Activated CD4-positive, alpha-beta T cell treated with anti-CD3 and anti-CD28 coated beads for 36 hours (primary cell): ENCODE measurements at regions of chr1 and their contacts with region 1.

Region 1: DNA sequence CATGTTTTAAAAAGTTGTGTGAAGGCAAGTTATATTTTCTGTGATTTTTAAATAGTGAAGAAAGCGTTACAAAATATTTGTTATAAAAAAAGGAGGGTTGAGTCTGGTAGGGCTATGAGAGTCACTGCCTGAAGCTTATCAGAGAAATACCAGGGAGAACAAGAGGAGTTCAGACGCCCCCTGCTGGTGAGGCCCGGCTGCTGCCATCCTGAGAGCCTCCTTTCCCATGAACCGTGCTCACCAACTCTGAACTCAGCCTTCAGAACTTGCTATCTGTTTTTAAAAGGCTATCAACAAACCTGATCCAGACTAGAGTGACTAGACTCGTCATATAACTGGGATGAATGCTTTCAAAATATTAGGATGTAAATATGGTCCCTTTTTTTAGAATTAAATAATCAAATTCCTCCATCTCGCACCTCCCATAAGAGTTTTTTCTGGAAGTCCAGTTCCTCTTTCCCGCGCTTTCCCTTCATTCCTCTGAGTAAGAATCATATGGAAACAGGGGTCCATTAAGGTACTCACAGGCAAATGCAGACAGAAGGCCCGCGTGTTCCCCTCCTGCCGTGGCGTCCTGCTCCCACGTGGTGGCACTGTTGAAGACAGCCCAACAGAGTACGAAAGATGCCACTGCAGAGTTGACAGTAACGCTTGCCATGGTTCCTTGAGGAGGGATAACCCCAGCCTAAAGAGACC is 26.2 kb upstream of the SPATA6 start:
- DNase-seq: peak; percentile 87
- ATAC-seq: peak; percentile 95
- H3K4me3 Mint-ChIP-seq: no peak overlapping the region
- H3K27ac Mint-ChIP-seq: no peak overlapping the region
- H3K4me1 Mint-ChIP-seq: peaks cover 2% of the 10 kb centered on the region
- H3K27me3 Mint-ChIP-seq: no peaks in the 10 kb centered on the region

Region 2: GRCh38 chr1:48109390-48110013 is 388.7 kb before region 1 on chr1:
- CTCF ChIA-PET with region 1: interaction called, 12 read pairs
- POLR2A ChIA-PET with region 1: no interaction called
- intact Hi-C with region 1: loop called (anchors 1 to 2 kb)
- DNase-seq: no peak
- ATAC-seq: no peak
- H3K4me3 Mint-ChIP-seq: no peak overlapping the region
- H3K27ac Mint-ChIP-seq: no peak overlapping the region
- H3K4me1 Mint-ChIP-seq: peaks cover 5% of the 10 kb centered on the region
- H3K27me3 Mint-ChIP-seq: peaks cover 7% of the 10 kb centered on the region

Region 3: DNA sequence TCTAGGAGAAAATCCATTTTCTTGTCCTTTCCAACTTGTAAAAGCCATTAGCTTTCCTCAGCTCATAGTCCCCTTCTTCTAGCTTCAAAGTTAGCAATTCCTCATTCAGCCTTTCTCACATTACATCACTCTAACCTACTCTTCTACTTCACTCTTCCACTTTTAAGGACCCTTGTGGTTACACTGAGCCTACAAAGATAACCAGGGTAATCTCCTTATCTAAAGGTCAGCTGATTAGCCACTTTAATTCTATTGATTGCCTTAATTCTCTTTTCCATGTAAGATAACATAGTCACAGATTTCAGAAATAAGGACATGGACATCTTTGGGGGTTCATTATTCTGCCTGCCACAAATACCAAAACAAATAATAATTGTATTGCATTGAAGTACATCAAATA is 17.7 kb before region 1 on chr1:
- CTCF ChIA-PET with region 1: interaction called, 17 read pairs
- POLR2A ChIA-PET with region 1: no interaction called
- intact Hi-C with region 1: no loop called
- DNase-seq: no peak
- ATAC-seq: no peak
- H3K4me3 Mint-ChIP-seq: no peak overlapping the region
- H3K27ac Mint-ChIP-seq: no peak overlapping the region
- H3K4me1 Mint-ChIP-seq: no peaks in the 10 kb centered on the region
- H3K27me3 Mint-ChIP-seq: peaks cover 2% of the 10 kb centered on the region

Region 4: GRCh38 chr1:48773133-48773532 is 274.9 kb after region 1 on chr1:
- CTCF ChIA-PET with region 1: no interaction called
- POLR2A ChIA-PET with region 1: no interaction called
- intact Hi-C with region 1: no loop called
- DNase-seq: no peak
- ATAC-seq: peak; percentile 60
- H3K4me3 Mint-ChIP-seq: no peak overlapping the region
- H3K27ac Mint-ChIP-seq: peak overlapping the region; percentile 34
- H3K4me1 Mint-ChIP-seq: peaks cover 53% of the 10 kb centered on the region
- H3K27me3 Mint-ChIP-seq: peaks cover 7% of the 10 kb centered on the region